Colonic mucosa (tissue), 4 donors: ENCODE measurements at regions of chr2 and their contacts with region 1.

Region 1: GRCh38 chr2:217785544-217786045 is 217.2 kb downstream of the TNS1 start:
- DNase-seq: peak; percentile 78
- H3K4me3 ChIP-seq: no peak overlapping the region
- H3K27ac ChIP-seq: no peak overlapping the region
- H3K4me1 ChIP-seq: no peaks in the 10 kb centered on the region
- H3K27me3 ChIP-seq: no peaks in the 10 kb centered on the region
- CTCF ChIP-seq: peak; percentile 93

Region 2: GRCh38 chr2:217886720-217887309 is 101.2 kb after region 1 on chr2:
- intact Hi-C with region 1: loop called (anchors 2 kb)
- DNase-seq: peak; percentile 73
- H3K4me3 ChIP-seq: no peak overlapping the region
- H3K27ac ChIP-seq: no peak overlapping the region
- H3K4me1 ChIP-seq: no peaks in the 10 kb centered on the region
- H3K27me3 ChIP-seq: no peaks in the 10 kb centered on the region
- CTCF ChIP-seq: peak; percentile 66

Region 3: DNA sequence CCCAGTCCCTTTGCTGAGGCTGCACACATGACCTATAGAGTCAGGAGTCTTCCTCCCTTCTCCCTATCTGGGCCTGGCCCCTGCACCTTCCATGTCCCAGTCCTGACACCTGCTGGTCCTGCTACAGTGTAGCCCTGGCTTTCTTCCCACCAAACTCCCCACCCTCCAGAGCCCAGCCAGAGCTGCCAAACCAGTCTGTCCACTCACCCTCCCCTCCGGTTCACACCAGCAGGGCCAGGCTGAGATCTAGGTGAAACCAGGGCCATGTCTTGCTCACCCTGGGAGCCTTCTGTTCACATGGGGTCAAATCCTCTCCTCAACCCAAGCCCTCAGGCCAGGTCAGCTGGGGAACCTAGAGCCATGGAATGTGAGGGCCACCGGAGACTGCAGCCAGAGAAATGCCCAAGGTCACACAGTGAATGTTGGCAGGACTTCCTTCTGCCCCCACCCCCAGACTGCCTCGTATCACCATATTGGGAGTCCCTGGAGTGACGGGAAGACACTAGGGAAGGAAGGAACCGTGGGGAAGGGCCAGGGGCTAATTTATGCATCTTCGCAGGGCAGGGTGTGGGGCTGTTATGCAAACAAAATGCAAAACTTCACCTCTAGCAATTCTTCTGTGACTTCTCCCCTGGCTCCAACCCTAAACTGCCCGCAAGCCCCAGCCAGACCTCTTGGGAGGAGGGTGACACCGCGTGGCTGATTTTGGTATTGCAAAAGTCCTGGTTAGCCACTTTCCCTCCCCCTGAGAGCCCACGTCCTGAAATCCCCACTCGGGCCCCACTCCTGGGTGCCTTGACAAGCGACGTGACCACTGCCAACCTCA is 202.6 kb after region 1 on chr2:
- intact Hi-C with region 1: loop called (anchors 2 kb)
- DNase-seq: peak; percentile 86
- H3K4me3 ChIP-seq: no peak overlapping the region
- H3K27ac ChIP-seq: no peak overlapping the region
- H3K4me1 ChIP-seq: no peaks in the 10 kb centered on the region
- H3K27me3 ChIP-seq: no peaks in the 10 kb centered on the region
- CTCF ChIP-seq: peak; percentile 83

Region 4: GRCh38 chr2:218033590-218034496 is 248.2 kb after region 1 on chr2:
- intact Hi-C with region 1: loop called (anchors 10 kb)
- DNase-seq: peak; percentile 17
- H3K4me3 ChIP-seq: peak overlapping the region; percentile 9
- H3K27ac ChIP-seq: no peak overlapping the region
- H3K4me1 ChIP-seq: no peaks in the 10 kb centered on the region
- H3K27me3 ChIP-seq: no peaks in the 10 kb centered on the region
- CTCF ChIP-seq: no peak

Region 5: GRCh38 chr2:218074031-218074430 is 288.4 kb after region 1 on chr2:
- intact Hi-C with region 1: loop called (anchors 10 kb)
- DNase-seq: no peak
- H3K4me3 ChIP-seq: no peak overlapping the region
- H3K27ac ChIP-seq: no peak overlapping the region
- H3K4me1 ChIP-seq: no peaks in the 10 kb centered on the region
- H3K27me3 ChIP-seq: no peaks in the 10 kb centered on the region
- CTCF ChIP-seq: peak; percentile 24